ENCODE measurements at regions of chr5 and their contacts with region 1.

Region 1: DNA sequence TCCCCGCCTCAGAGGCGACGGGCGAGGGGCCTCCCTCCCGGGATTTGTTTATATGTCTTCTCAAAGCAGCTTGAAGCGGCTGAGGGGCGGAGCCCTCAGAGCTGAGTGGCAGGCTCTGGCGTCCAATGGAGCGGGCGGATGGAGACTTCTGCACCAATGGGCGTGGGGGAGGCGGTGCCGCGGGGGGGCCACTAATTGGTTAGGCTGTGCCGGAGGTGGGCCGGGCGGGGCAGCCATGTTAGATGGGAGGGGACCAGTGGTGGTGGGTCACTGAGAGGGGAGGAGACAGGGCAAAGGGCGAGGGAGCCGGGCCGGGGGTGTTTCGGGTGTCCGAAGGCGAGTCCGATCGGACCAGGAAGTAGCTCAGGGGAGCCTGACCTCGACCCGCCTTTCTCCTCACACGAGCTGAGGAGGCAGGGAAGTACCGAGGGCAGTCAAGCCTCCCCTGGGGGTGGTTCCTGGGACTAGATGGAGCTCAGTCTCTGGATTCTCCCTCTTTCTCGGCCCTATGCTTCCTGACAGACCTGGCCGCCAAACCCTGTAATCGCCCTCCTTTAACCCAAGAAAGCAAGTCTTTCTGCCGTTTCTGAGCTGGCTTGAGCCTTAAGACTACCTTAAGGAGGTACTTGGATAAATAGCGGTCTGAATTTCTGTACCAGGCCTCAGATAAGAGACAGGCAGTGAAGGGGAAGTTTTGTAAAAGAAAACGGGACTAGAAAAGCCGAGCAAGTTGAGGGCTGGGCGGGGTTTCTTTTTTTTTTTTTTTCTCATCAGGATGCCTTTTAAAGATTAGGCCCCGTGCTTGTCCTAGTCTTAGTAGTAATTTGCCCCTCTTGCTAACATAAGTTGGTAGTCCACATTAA is 1.1 kb downstream of the CREBRF start:
- DNase-seq: peak; percentile 98 to 99 (median 98)
- ATAC-seq: peak; percentile 81
- H3K4me3 ChIP-seq: peak overlapping the region; percentile 92 to 99
- H3K4me3 Mint-ChIP-seq: peak overlapping the region; percentile 94
- H3K27ac ChIP-seq: peak overlapping the region; percentile 80 to 81
- H3K27ac Mint-ChIP-seq: peak overlapping the region; percentile 94
- H3K4me1 ChIP-seq: peaks cover 36% of the 10 kb centered on the region
- H3K4me1 Mint-ChIP-seq: peaks cover 44% of the 10 kb centered on the region
- H3K27me3 ChIP-seq: no peaks in the 10 kb centered on the region
- H3K27me3 Mint-ChIP-seq: no peaks in the 10 kb centered on the region
- CTCF ChIP-seq: no peak

Region 2: DNA sequence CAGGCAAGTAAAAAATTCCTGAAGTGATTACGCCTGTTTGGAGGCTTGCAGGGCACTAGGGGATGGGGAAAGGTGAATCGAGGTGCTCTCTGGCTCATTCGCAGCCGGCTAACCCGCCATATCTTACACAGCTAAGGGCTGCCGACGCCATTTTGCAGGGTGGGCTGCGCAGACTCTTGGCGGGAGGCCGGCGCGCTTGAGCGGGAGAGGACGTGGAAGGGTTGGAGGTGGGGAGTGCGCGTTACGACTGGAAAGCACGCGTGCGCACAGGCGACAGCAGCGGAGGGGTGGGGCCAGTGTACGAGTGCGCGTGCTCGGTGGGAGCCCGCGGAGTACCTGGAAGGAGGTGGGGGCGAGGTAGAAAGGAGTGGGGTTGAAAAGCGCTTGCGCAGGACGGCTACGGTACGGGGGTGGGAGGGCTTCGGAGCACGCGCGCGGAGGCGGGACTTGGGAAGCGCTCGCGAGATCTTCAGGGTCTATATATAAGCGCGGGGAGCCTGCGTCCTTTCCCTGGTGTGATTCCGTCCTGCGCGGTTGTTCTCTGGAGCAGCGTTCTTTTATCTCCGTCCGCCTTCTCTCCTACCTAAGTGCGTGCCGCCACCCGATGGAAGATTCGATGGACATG is 1669.8 kb before region 1 on chr5 and contains the start of gene NPM1:
- CTCF ChIA-PET with region 1: no interaction called
- POLR2A ChIA-PET with region 1: no interaction called
- intact Hi-C with region 1: loop called (anchors 2 to 5 kb)
- DNase-seq: peak; percentile 95 to 100 (median 97)
- ATAC-seq: peak; percentile 88
- H3K4me3 ChIP-seq: peak within 1 kb of the TSS; percentile 92 to 96
- H3K4me3 Mint-ChIP-seq: peak within 1 kb of the TSS; percentile 96
- H3K27ac ChIP-seq: peak within 1 kb of the TSS; percentile 94 to 97
- H3K27ac Mint-ChIP-seq: peak within 1 kb of the TSS; percentile 99
- H3K4me1 ChIP-seq: peaks cover 45% of the 10 kb centered on the region
- H3K4me1 Mint-ChIP-seq: peaks cover 46% of the 10 kb centered on the region
- H3K27me3 ChIP-seq: no peaks in the 10 kb centered on the region
- H3K27me3 Mint-ChIP-seq: peaks cover 3% of the 10 kb centered on the region
- CTCF ChIP-seq: no peak
- total RNA-seq, gene NPM1: 1,297 to 1,299 TPM

Region 3: DNA sequence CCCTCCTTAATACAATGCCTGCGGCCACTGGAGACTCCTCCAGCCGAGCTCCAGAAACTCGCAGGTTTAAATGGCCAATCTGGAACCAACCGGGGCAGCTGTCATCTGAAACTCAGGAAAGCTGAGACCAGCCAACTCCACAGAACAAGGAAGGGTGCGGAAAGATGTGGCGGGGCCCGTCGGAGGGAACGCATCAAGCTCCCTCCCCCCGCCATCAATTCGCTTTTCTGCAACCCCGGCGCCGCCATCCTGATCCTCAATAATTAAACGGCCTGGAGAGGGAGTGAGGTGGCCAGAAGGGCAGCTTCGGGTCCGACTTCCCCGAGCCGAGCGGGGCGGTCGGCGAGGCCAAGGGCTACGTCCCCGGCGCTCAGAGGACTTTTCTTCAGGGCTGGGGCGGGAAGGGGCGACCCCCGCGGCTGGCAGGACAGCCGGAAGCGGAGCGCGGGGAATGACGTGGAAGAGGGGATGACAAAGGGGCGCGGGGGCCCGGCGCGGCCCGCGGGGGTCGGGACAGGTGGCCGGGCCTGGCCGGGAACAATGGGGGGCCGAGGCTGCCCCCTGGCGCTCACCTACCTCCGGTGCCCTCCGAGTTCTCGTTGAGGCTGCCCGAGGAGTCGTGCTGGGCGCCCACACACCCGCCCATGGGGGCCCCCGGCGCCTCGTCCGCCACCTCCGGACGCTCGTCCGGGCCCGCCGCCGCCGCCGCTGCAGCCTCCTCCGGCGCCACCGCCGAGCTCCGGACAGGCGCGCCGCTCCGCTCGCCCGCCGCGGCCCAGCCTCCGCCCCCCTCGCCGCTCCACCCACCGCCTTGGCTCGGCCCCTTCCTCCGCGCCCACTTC is 774.1 kb before region 1 on chr5 and contains the start of gene UBTD2:
- CTCF ChIA-PET with region 1: no interaction called
- POLR2A ChIA-PET with region 1: no interaction called
- intact Hi-C with region 1: loop called in 1 of 2 experiments (anchors 5 kb)
- DNase-seq: peak; percentile 44 to 85 (median 70)
- ATAC-seq: peak; percentile 76
- H3K4me3 ChIP-seq: peak within 1 kb of the TSS; percentile 76 to 78
- H3K4me3 Mint-ChIP-seq: peak within 1 kb of the TSS; percentile 88
- H3K27ac ChIP-seq: no peak within 1 kb of the TSS
- H3K27ac Mint-ChIP-seq: peak within 1 kb of the TSS; percentile 77
- H3K4me1 ChIP-seq: peaks cover 18% of the 10 kb centered on the region
- H3K4me1 Mint-ChIP-seq: peaks cover 26% of the 10 kb centered on the region
- H3K27me3 ChIP-seq: no peaks in the 10 kb centered on the region
- H3K27me3 Mint-ChIP-seq: no peaks in the 10 kb centered on the region
- CTCF ChIP-seq: peak; percentile 61
- total RNA-seq, gene UBTD2: 0.78 to 0.79 TPM

Region 4: DNA sequence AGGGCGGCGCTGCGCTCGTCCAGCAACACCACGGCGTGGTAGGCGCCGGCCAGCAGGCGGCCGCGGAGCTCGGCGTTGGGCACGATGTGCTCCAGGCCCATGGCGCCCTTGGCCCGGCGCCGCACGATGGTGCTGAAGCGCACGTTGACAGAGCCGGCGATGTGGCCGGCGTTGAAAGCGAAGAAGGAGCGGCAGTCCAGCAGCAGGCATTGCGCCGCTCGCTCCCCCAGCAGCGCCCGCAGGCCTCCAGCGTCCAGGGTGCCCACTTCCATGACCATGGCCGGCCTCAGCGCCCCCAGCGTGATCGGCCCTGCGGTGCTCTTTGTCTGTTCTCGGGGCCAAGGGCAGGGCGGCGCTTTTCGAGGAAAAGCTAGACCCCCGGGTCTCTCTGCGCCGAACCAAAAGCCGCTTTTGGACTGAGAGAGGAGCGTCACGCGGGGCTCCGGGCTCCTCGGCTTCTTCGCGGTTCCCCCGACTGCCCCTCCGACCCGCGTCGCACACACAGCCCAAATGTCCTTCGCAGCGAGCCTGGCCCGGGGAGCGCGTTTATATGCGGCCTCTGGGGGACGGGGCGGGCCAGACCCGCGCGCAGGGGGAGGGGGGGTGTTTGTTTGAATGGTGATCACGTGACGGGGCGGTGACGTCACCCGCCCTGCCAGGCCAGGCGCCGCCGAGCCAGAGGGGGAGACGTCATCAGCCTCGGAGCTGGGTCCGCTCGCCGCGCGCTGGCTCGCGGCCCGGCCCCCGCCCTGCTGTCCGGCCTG is 286.4 kb before region 1 on chr5 and contains the start of gene DUSP1:
- CTCF ChIA-PET with region 1: no interaction called
- POLR2A ChIA-PET with region 1: no interaction called
- intact Hi-C with region 1: loop called in 1 of 2 experiments (anchors 2 kb)
- DNase-seq: peak; percentile 97 to 99 (median 98)
- ATAC-seq: peak; percentile 54
- H3K4me3 ChIP-seq: peak within 1 kb of the TSS; percentile 85 to 89
- H3K4me3 Mint-ChIP-seq: peak within 1 kb of the TSS; percentile 95
- H3K27ac ChIP-seq: peak within 1 kb of the TSS; percentile 99 to 100
- H3K27ac Mint-ChIP-seq: peak within 1 kb of the TSS; percentile 98
- H3K4me1 ChIP-seq: peaks cover 36% of the 10 kb centered on the region
- H3K4me1 Mint-ChIP-seq: peaks cover 58% of the 10 kb centered on the region
- H3K27me3 ChIP-seq: no peaks in the 10 kb centered on the region
- H3K27me3 Mint-ChIP-seq: no peaks in the 10 kb centered on the region
- CTCF ChIP-seq: no peak
- total RNA-seq, gene DUSP1: 745 to 767 TPM

Region 5: GRCh38 chr5:172958331-172959046 is 98.8 kb before region 1 on chr5:
- CTCF ChIA-PET with region 1: interaction called, 3 read pairs
- POLR2A ChIA-PET with region 1: interaction called, 3 read pairs
- intact Hi-C with region 1: loop called (anchors 1 kb)
- DNase-seq: peak; percentile 23 to 79 (median 63)
- ATAC-seq: peak; percentile 65
- H3K4me3 ChIP-seq: peak overlapping the region; percentile 76 to 77
- H3K4me3 Mint-ChIP-seq: peak overlapping the region; percentile 97
- H3K27ac ChIP-seq: peak overlapping the region; percentile 65 to 87
- H3K27ac Mint-ChIP-seq: peak overlapping the region; percentile 98
- H3K4me1 ChIP-seq: peaks cover 13% of the 10 kb centered on the region
- H3K4me1 Mint-ChIP-seq: peaks cover 38% of the 10 kb centered on the region
- H3K27me3 ChIP-seq: no peaks in the 10 kb centered on the region
- H3K27me3 Mint-ChIP-seq: no peaks in the 10 kb centered on the region
- CTCF ChIP-seq: no peak

Region 6: GRCh38 chr5:173144200-173145176 is 87.2 kb after region 1 on chr5 and contains the start of gene BNIP1:
- CTCF ChIA-PET with region 1: interaction called, 4 read pairs
- POLR2A ChIA-PET with region 1: interaction called, 3 read pairs
- intact Hi-C with region 1: loop called (anchors 1 kb)
- DNase-seq: peak; percentile 91 to 98 (median 97)
- ATAC-seq: peak; percentile 94
- H3K4me3 ChIP-seq: peak within 1 kb of the TSS; percentile 74 to 99
- H3K4me3 Mint-ChIP-seq: peak within 1 kb of the TSS; percentile 99
- H3K27ac ChIP-seq: peak within 1 kb of the TSS; percentile 95 to 98
- H3K27ac Mint-ChIP-seq: peak within 1 kb of the TSS; percentile 99
- H3K4me1 ChIP-seq: peaks cover 10% of the 10 kb centered on the region
- H3K4me1 Mint-ChIP-seq: peaks cover 11% of the 10 kb centered on the region
- H3K27me3 ChIP-seq: no peaks in the 10 kb centered on the region
- H3K27me3 Mint-ChIP-seq: no peaks in the 10 kb centered on the region
- CTCF ChIP-seq: peak; percentile 68
- total RNA-seq, gene BNIP1: 22.7 to 24.0 TPM